ENCODE measurements at regions of chr1 and their contacts with region 1.

Region 1: DNA sequence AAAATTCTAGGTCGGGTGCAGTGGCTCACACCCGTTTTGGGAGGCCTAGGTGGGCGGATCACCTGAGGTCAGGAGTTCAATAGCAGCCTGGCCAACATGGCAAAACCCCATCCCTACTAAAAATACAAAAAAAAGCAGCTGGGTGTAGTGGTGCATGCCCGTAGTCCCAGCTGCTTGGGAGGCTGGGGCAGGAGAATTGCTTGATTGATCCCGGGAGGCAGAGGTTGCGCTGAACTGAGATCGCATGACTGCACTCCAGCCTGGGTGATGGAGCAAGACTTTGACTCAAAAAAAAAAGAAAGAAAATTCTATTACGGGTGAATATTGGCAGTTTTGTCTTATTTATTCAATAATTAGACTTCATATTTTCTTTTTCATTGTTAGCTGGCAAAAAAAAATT is 62.1 kb downstream of the SNX7 start:
- DNase-seq: no peak
- H3K4me3 ChIP-seq: no peak overlapping the region
- H3K27ac ChIP-seq: no peak overlapping the region
- H3K4me1 ChIP-seq: no peaks in the 10 kb centered on the region
- H3K27me3 ChIP-seq: no peaks in the 10 kb centered on the region
- CTCF ChIP-seq: no peak
- EP300 ChIP-seq: no peak
- POLR2A ChIP-seq: no peak

Region 2: GRCh38 chr1:98794196-98794886 is 70.8 kb after region 1 on chr1:
- in situ Hi-C with region 1: no loop called
- intact Hi-C with region 1: no loop called
- DNase-seq: peak; percentile 36
- H3K4me3 ChIP-seq: no peak overlapping the region
- H3K27ac ChIP-seq: no peak overlapping the region
- H3K4me1 ChIP-seq: no peaks in the 10 kb centered on the region
- H3K27me3 ChIP-seq: no peaks in the 10 kb centered on the region
- CTCF ChIP-seq: peak; percentile 61 to 68 (median 64)
- EP300 ChIP-seq: no peak
- POLR2A ChIP-seq: no peak

Region 3: DNA sequence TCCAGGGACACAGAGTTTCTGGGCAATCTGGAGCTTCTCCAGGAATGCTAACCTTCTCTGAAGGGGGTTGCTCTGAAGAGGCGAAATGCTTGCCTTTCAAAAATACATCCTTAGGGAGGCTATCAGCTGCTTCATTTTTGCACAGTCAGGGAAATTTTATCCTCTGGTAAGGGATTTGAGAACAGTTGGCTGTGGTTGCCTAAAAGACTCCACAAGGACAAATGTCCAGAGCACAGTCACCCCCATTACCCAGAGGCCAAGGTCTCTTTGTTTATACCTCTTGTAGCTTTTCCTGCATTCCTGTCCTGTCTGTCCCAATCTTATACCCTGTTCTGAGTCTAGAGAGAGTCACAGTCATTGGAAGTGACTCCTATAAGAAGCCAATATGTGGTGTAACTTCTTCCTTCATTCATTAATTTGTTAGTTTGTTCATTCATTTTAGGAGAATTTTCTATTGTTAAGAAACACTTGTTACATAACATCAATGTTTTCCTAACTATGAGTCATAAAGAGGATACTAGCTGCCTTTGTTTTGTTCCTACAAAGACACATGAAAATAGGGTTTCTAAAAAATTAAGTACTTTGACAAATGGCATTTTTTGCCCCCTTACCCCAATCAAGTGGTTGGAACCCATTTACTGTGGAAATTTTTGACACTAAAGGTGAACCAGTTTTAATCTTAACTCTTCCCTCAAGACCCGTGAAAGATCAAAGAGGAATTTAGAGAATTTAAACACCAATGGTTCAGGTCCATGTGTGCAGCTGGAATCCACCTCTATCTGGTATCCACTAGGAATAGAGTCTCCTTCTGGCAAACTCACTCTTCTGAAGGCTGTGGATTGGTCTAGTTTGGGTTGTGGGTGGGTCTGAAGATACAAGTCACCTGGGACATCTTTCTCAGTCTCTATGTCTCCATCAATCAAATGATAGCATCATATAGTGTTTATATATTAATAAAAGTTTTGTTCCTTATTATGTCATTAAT is 1861.5 kb after region 1 on chr1:
- in situ Hi-C with region 1: no loop called
- intact Hi-C with region 1: loop called (anchors 5 kb)
- DNase-seq: no peak
- H3K4me3 ChIP-seq: no peak overlapping the region
- H3K27ac ChIP-seq: no peak overlapping the region
- H3K4me1 ChIP-seq: no peaks in the 10 kb centered on the region
- H3K27me3 ChIP-seq: no peaks in the 10 kb centered on the region
- CTCF ChIP-seq: no peak
- EP300 ChIP-seq: no peak
- POLR2A ChIP-seq: no peak